IMR-90 (cell line): ENCODE measurements at regions of chr10 and their contacts with region 1.

Region 1: GRCh38 chr10:61992671-61993668 is 91.5 kb downstream of the ARID5B start:
- DNase-seq: peak; percentile 88
- ATAC-seq: peak; percentile 69
- H3K4me3 ChIP-seq: peak overlapping the region; percentile 46; the same call in 1 of the 2 replicates
- H3K27ac ChIP-seq: peak overlapping the region; percentile 93
- H3K4me1 ChIP-seq: peaks cover 12% of the 10 kb centered on the region
- H3K27me3 ChIP-seq: no peaks in the 10 kb centered on the region
- CTCF ChIP-seq: no peak
- POLR2A ChIP-seq: no peak
- RAD21 ChIP-seq: no peak

Region 2: DNA sequence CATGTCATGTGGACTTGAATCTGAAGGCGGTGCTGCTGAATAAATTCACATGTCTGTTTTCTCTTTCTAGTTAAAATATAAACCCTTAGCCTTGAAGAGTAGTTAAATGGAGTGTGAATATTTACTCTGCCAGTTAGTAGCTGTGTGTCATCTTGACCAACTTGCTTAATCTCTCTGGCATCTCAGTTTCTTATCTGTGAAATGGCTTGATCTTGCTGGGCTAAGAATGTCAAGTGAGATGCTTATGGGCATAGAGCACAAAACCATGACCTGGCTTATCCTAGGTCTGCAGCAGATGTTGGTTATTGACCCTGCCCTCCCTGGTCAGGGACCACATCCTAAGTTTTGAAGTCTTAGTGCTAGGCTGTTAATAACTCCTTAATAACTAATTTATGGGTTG is 74.8 kb before region 1 on chr10:
- CTCF ChIA-PET with region 1: no interaction called
- POLR2A ChIA-PET with region 1: interaction called, 21 read pairs
- dilution Hi-C with region 1: no loop called
- in situ Hi-C with region 1: no loop called
- intact Hi-C with region 1: no loop called
- DNase-seq: no peak
- ATAC-seq: no peak
- H3K4me3 ChIP-seq: no peak overlapping the region
- H3K27ac ChIP-seq: no peak overlapping the region
- H3K4me1 ChIP-seq: peaks cover 12% of the 10 kb centered on the region
- H3K27me3 ChIP-seq: no peaks in the 10 kb centered on the region
- CTCF ChIP-seq: no peak
- POLR2A ChIP-seq: no peak
- RAD21 ChIP-seq: no peak